Colonic mucosa (tissue), 4 donors: ENCODE measurements at regions of chr15 and their contacts with region 1.

Region 1: DNA sequence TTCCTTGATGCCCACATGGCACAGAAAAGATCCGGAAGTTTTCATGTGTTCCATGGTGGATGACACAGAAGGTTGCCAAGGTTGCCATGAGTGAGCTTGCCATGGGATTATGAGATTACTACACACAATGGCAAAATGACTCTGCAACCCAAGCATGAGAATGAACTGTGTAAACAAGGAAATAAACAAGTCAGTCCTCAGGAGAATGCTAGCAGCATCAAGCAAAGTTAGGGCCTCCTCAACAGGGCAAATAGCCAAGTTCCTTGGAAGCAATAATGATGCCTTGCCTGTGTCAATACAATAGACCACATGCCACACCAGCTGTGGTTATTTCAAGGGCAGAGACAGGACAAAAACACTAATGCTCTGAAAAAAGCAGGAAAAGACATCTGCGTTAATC is 41.8 kb downstream of the AQR start:
- DNase-seq: no peak
- H3K4me3 ChIP-seq: no peak overlapping the region
- H3K27ac ChIP-seq: no peak overlapping the region
- H3K4me1 ChIP-seq: no peaks in the 10 kb centered on the region
- H3K27me3 ChIP-seq: no peaks in the 10 kb centered on the region
- CTCF ChIP-seq: no peak

Region 2: GRCh38 chr15:34708422-34708821 is 219.3 kb before region 1 on chr15:
- intact Hi-C with region 1: loop called (anchors 5 kb)
- DNase-seq: no peak
- H3K4me3 ChIP-seq: no peak overlapping the region
- H3K27ac ChIP-seq: no peak overlapping the region
- H3K4me1 ChIP-seq: no peaks in the 10 kb centered on the region
- H3K27me3 ChIP-seq: no peaks in the 10 kb centered on the region
- CTCF ChIP-seq: peak; percentile 41